SK-N-SH (cell line): ENCODE measurements at regions of chr5 and their contacts with region 1.

Region 1: GRCh38 chr5:75681125-75681830 is 36.0 kb downstream of the POC5 start:
- DNase-seq: no peak
- H3K4me3 ChIP-seq: no peak overlapping the region; a peak in 1 of 4 replicates
- H3K27ac ChIP-seq: peak overlapping the region in 1 of 2 experiments; percentile 16; a peak in 2 of 4 replicates
- H3K4me1 ChIP-seq: peaks cover 5 to 12% of the 10 kb centered on the region in 2 experiments; a peak in 3 of 4 replicates
- H3K27me3 ChIP-seq: no peaks in the 10 kb centered on the region
- CTCF ChIP-seq: peak; percentile 80
- EP300 ChIP-seq: no peak
- RAD21 ChIP-seq: peak; percentile 68

Region 2: DNA sequence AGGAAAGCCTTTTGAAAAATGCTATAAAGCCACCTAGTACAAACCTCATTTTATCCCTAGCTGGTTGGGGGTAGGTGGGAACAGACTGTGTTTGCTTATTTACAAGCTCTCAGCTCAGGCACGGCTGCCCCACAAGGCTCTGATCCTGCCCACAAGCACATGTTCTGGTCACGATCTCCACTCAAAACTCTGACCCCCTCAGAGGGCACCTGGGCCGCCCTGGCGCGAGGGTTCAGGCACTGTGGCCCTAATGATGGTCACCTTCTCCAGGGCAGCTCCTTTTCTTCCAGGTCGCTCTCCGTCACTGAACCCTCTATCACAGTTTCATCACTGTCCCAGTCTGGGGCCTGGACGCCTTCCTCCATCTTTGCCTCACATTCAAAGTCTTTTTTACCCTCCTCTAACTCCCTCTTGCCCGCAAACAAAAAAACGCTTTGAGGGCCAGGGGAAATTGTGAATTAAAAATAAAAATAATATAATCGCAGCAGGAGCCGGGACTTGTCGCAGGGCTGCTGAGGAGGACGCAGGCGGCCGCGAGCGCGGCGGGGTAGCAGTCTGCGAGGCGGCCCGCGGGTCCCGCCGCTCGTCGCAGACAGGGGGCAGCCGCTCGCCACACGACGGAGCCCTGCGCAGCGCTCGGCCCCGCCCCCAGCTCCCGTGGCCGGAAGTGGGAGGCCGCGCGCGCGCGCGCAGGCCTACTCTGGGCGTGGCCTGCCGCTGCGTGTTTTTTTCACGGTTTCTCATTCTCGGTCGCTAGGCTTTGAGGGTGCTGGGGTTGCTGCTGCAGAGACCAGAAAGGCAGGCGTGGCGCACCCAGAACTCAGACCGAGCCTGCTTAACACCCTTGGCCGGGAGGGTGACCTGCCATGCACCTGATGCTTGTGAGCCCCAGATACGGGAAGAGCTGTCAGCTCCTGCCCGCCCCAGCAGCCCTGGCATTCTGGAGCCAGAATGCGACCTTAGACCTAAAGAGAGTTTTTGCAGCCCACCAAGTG is 444.7 kb before region 1 on chr5 and contains the start of gene ANKRD31:
- CTCF ChIA-PET with region 1: interaction called, 28 read pairs
- POLR2A ChIA-PET with region 1: interaction called, 4 read pairs
- DNase-seq: peak; percentile 96
- H3K4me3 ChIP-seq: peak within 1 kb of the TSS; percentile 73 to 92
- H3K27ac ChIP-seq: peak within 1 kb of the TSS in 1 of 2 experiments; percentile 80; a peak in 2 of 4 replicates
- H3K4me1 ChIP-seq: peaks cover 0 to 9% of the 10 kb centered on the region in 2 experiments; a peak in 1 of 4 replicates
- H3K27me3 ChIP-seq: no peaks in the 10 kb centered on the region
- CTCF ChIP-seq: peak; percentile 75
- EP300 ChIP-seq: 0 out of 4 replicates have a peak, but pooled peaks of 1 of the 2 experiments have one; percentile 10
- RAD21 ChIP-seq: peak; percentile 70
- polyA plus RNA-seq, gene ANKRD31: 0.05 and 0.06 TPM in 2 replicates

Region 3: GRCh38 chr5:75286211-75286773 is 395.0 kb before region 1 on chr5:
- CTCF ChIA-PET with region 1: no interaction called
- POLR2A ChIA-PET with region 1: no interaction called
- DNase-seq: no peak
- H3K4me3 ChIP-seq: no peak overlapping the region
- H3K27ac ChIP-seq: no peak overlapping the region
- H3K4me1 ChIP-seq: no peaks in the 10 kb centered on the region
- H3K27me3 ChIP-seq: no peaks in the 10 kb centered on the region
- CTCF ChIP-seq: no peak
- EP300 ChIP-seq: no peak
- RAD21 ChIP-seq: no peak

Region 4: DNA sequence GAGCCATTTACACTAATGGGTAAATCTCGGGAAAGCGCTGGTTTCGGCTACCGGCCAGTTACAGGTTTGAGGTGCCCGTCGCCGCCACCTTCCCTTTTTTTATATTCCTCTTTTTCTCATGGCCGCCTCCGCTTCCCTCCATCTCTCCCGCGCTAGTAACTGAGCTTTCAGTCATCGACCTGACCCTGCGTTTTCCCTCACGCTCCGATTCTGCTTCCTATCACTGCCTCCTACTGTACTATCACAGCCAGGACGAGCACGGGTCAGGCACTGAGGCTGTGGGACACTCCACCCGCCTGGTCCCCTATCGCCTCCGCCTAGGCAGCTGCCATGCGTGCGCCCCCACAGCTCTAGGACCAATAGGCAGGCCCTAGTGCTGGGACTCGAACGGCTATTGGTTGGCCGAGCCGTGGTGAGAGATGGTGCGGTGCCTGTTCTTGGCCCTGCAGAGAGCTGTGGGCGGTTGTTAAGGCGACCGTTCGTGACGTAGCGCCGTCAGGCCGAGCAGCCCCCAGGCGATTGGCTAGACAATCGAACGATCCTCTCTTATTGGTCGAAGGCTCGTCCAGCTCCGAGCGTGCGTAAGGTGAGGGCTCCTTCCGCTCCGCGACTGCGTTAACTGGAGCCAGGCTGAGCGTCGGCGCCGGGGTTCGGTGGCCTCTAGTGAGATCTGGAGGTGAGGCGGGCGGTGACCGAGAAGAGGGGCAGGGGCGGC is 344.5 kb before region 1 on chr5 and contains the start of gene HMGCR:
- CTCF ChIA-PET with region 1: interaction called, 10 read pairs
- POLR2A ChIA-PET with region 1: interaction called, 6 read pairs
- DNase-seq: peak; percentile 92
- H3K4me3 ChIP-seq: peak within 1 kb of the TSS; percentile 70 to 90
- H3K27ac ChIP-seq: peak within 1 kb of the TSS; percentile 75 to 98
- H3K4me1 ChIP-seq: peaks cover 0 to 9% of the 10 kb centered on the region in 2 experiments; a peak in 2 of 4 replicates
- H3K27me3 ChIP-seq: no peaks in the 10 kb centered on the region
- CTCF ChIP-seq: peak; percentile 39
- EP300 ChIP-seq: 0 out of 4 replicates have a peak, but pooled peaks of 1 of the 2 experiments have one; percentile 29
- RAD21 ChIP-seq: peak; percentile 65
- polyA plus RNA-seq, gene HMGCR: 8.2 and 11.0 TPM in 2 replicates

Region 5: GRCh38 chr5:75668977-75669689 is 12.1 kb before region 1 on chr5:
- CTCF ChIA-PET with region 1: interaction called, 17 read pairs
- POLR2A ChIA-PET with region 1: no interaction called
- DNase-seq: no peak
- H3K4me3 ChIP-seq: no peak overlapping the region; a peak in 1 of 4 replicates
- H3K27ac ChIP-seq: peak overlapping the region in 1 of 2 experiments; percentile 67; a peak in 2 of 4 replicates
- H3K4me1 ChIP-seq: peaks cover 0 to 44% of the 10 kb centered on the region in 2 experiments; a peak in 2 of 4 replicates
- H3K27me3 ChIP-seq: no peaks in the 10 kb centered on the region
- CTCF ChIP-seq: no peak
- EP300 ChIP-seq: no peak; a peak in 1 of 4 replicates
- RAD21 ChIP-seq: no peak; the same call in 1 of the 2 replicates